Calu3 (cell line): ENCODE measurements at regions of chr5 and their contacts with region 1.

Region 1: GRCh38 chr5:166257661-166258060 is 2033.8 kb upstream of the WWC1 start:
- DNase-seq: no peak
- H3K4me3 Mint-ChIP-seq: no peak overlapping the region
- H3K27ac Mint-ChIP-seq: no peak overlapping the region
- H3K4me1 Mint-ChIP-seq: peaks cover 9% of the 10 kb centered on the region
- H3K27me3 Mint-ChIP-seq: no peaks in the 10 kb centered on the region
- CTCF ChIP-seq: no peak

Region 2: DNA sequence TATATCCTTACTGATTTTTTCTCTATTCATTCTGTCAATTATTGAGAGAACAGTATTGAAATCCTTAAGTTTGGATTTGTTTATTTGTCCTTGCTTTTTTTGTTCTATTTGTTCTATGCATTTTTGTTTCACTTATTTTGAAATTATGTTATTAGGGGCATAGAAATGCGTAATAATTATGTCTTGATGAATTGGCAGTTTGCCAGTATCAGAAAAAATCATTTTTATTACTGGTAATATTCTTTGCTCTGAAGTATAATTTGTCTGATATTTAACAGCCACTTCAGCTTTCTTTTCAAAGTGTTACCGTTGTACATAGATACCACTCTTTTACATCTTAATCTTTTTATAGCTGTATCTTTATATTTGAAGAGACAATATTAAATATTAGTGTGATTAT is 57.1 kb before region 1 on chr5:
- CTCF ChIA-PET with region 1: no interaction called
- intact Hi-C with region 1: no loop called
- DNase-seq: no peak
- H3K4me3 Mint-ChIP-seq: no peak overlapping the region
- H3K27ac Mint-ChIP-seq: no peak overlapping the region
- H3K4me1 Mint-ChIP-seq: no peaks in the 10 kb centered on the region
- H3K27me3 Mint-ChIP-seq: no peaks in the 10 kb centered on the region
- CTCF ChIP-seq: no peak

Region 3: DNA sequence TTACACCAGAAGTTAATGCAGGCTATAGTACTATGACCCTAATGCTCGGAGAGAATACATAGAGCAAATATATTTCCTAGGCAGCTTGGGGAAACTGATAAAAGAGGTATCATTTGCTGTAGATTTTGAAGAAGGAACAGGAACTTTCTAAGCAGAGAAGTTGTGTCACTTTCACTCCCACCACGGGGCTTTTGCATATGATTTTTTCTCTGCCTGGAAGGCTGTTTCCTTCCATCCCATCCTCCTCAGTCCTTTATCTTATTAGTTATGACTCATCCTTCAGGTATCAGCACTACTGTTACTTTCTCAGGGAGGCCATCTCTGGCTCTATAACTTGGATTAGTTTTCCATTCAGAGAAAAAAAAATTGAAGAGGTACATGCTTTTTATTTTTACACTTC is 27.7 kb after region 1 on chr5:
- CTCF ChIA-PET with region 1: no interaction called
- intact Hi-C with region 1: loop called (anchors 2 kb)
- DNase-seq: no peak
- H3K4me3 Mint-ChIP-seq: no peak overlapping the region
- H3K27ac Mint-ChIP-seq: no peak overlapping the region
- H3K4me1 Mint-ChIP-seq: no peaks in the 10 kb centered on the region
- H3K27me3 Mint-ChIP-seq: no peaks in the 10 kb centered on the region
- CTCF ChIP-seq: no peak